AG04449 (cell line): ENCODE measurements at regions of chr19 and their contacts with region 1.

Region 1: GRCh38 chr19:18160971-18161635 is 8.1 kb downstream of the PIK3R2 start:
- DNase-seq: no peak
- H3K4me3 ChIP-seq: peak overlapping the region; percentile 27
- CTCF ChIP-seq: peak; percentile 55

Region 2: DNA sequence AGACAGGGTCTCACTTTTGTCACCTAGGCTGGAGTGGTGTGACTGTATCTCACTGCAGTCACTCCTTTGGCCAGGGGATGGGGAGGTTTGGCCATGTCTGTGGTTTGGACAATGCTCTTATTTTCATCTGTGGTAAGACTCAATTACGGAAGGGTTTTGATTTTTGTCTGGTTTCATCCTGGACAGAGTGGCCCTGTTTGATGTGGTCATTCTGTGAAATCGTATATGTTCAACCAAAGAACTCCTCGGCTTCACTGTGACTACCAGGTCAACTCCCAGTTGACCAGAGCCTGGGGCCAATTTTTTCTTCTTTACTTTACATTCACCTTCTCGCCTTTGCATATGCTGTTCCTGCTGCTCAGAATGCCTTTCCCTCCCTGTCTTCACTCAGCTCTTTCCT is 235.1 kb before region 1 on chr19:
- CTCF ChIA-PET with region 1: no interaction called
- POLR2A ChIA-PET with region 1: no interaction called
- DNase-seq: no peak
- H3K4me3 ChIP-seq: no peak overlapping the region
- CTCF ChIP-seq: no peak

Region 3: GRCh38 chr19:18173572-18174288 is 12.6 kb after region 1 on chr19 and contains the start of gene IFI30:
- CTCF ChIA-PET with region 1: interaction called, 32 read pairs
- POLR2A ChIA-PET with region 1: no interaction called
- DNase-seq: no peak
- H3K4me3 ChIP-seq: peak within 1 kb of the TSS; percentile 71
- CTCF ChIP-seq: no peak

Region 4: GRCh38 chr19:18245297-18245696 is 84.2 kb after region 1 on chr19:
- CTCF ChIA-PET with region 1: interaction called, 52 read pairs
- POLR2A ChIA-PET with region 1: no interaction called
- DNase-seq: no peak
- H3K4me3 ChIP-seq: no peak overlapping the region
- CTCF ChIP-seq: no peak